MCF 10A (cell line): ENCODE measurements at regions of chr7 and their contacts with region 1.

Region 1: GRCh38 chr7:94643771-94644540 is 12.0 kb downstream of the SGCE start:
- DNase-seq: peak; percentile 68
- H3K4me3 Mint-ChIP-seq: no peak overlapping the region
- H3K27ac Mint-ChIP-seq: peak overlapping the region; percentile 11
- H3K4me1 Mint-ChIP-seq: peaks cover 25% of the 10 kb centered on the region
- H3K27me3 Mint-ChIP-seq: no peaks in the 10 kb centered on the region
- CTCF ChIP-seq: no peak

Region 2: GRCh38 chr7:94410413-94411187 is 233.4 kb before region 1 on chr7:
- CTCF ChIA-PET with region 1: no interaction called
- POLR2A ChIA-PET with region 1: no interaction called
- intact Hi-C with region 1: no loop called
- DNase-seq: no peak
- H3K4me3 Mint-ChIP-seq: no peak overlapping the region
- H3K27ac Mint-ChIP-seq: no peak overlapping the region
- H3K4me1 Mint-ChIP-seq: peaks cover 5% of the 10 kb centered on the region
- H3K27me3 Mint-ChIP-seq: no peaks in the 10 kb centered on the region
- CTCF ChIP-seq: no peak

Region 3: DNA sequence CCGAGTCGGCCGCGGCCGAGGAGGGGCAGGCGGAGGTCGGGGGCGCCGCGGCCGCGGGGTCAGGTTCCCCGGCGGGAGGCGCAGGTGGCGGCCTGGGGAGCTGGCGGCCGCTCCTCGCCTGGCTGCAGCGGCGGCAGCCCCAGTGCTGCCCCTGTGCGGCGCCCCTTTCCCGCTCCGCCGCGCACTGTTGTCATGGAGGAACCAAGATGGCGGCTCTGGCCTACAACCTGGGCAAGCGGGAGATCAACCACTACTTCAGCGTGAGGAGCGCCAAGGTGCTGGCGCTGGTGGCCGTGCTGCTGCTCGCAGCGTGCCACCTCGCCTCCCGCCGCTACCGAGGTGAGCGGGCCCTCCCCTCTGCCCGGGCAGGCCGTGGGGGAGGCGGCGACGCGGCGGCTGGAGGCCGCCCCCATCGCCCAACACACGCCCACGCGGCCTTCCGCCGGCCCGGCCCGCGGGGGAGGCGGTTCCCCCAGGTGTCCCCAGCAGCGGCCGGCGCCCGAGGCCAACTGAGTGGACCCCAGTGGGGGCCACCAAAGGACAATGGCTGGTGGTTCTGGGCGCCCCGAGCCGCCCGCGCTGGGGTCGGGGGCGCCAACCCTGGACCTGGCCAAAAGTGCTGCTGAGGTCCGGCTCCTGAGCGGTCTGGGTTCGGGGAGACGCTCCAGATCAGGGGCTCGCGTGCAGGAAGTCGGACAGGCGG is 133.9 kb before region 1 on chr7:
- CTCF ChIA-PET with region 1: interaction called, 4 read pairs
- POLR2A ChIA-PET with region 1: interaction called, 11 read pairs
- intact Hi-C with region 1: no loop called
- DNase-seq: peak; percentile 65
- H3K4me3 Mint-ChIP-seq: peak overlapping the region; percentile 69
- H3K27ac Mint-ChIP-seq: peak overlapping the region; percentile 43
- H3K4me1 Mint-ChIP-seq: peaks cover 32% of the 10 kb centered on the region
- H3K27me3 Mint-ChIP-seq: no peaks in the 10 kb centered on the region
- CTCF ChIP-seq: no peak

Region 4: DNA sequence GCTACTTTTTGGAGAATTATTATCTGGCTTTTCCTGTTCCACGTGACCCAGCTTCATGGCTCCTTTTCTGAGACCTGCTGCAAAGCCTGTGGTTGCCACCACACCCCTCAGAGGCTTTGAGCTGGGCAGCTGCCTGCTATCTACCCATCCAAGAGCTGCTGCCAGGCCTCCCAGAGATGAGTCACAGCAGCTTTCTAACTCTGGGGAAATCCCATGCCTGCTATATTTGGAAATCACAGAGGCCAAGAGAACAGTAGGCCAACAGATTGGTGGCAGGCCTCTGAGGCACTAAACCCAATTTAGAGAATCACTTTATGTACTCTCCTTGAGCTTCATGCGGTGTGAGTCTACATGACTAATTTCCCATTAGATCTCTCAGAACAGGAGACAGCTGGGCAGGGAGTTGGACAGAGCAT is 23.2 kb before region 1 on chr7:
- CTCF ChIA-PET with region 1: interaction called, 4 read pairs
- POLR2A ChIA-PET with region 1: interaction called, 12 read pairs
- intact Hi-C with region 1: no loop called
- DNase-seq: peak; percentile 97
- H3K4me3 Mint-ChIP-seq: no peak overlapping the region
- H3K27ac Mint-ChIP-seq: peak overlapping the region; percentile 75
- H3K4me1 Mint-ChIP-seq: peaks cover 13% of the 10 kb centered on the region
- H3K27me3 Mint-ChIP-seq: no peaks in the 10 kb centered on the region
- CTCF ChIP-seq: no peak

Region 5: DNA sequence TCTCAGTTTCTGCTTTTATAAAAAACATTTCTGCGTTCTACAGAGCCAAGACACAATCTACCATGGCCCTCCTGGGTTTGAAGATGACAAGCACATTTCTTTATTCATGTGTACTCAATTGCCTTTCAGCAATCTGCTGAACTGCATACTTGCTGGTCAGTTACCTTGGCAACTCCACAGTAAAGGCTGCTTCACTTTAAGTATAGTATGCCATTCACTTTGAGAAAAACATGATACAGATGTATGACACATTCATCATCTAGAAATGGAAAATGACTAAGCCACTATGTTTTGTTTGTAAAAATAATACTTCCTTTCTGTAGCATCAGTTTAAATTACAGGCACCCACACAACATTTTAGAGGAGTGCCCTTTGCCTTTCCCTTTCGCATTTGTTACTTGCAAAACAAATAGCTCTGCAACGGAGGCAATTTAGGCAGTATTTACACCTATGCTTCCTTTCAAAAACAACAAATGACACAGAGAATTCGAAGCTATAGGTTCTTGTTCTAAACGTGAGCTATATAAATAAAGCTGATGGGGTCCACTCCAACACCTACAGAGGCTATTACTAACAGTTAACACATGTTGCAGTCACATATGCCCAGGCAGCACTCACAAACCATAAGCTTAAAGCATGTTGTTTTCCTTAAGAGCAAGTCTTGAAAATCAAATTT is 11.5 kb before region 1 on chr7:
- CTCF ChIA-PET with region 1: interaction called, 3 read pairs
- POLR2A ChIA-PET with region 1: interaction called, 12 read pairs
- intact Hi-C with region 1: no loop called
- DNase-seq: peak; percentile 59
- H3K4me3 Mint-ChIP-seq: no peak overlapping the region
- H3K27ac Mint-ChIP-seq: peak overlapping the region; percentile 16
- H3K4me1 Mint-ChIP-seq: peaks cover 16% of the 10 kb centered on the region
- H3K27me3 Mint-ChIP-seq: no peaks in the 10 kb centered on the region
- CTCF ChIP-seq: no peak

Region 6: DNA sequence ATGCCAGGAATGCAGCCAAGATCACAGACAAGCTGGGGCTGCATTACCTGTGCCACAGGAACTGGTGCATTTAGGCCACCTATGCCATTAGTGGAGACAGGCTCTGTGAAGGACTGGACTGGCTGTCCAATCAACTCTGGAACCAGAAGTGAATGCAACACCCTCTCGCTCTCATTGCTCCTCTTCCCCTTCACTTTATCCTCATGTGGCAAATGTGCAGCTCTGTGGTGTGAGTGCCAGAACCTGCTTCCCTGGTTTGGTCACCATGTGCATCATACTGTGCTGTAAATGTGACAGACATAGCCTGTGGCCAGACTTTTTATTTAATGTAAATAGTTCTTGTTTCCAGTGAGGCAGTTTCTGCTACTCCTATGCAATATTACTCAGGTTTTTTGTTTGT is 190.3 kb after region 1 on chr7:
- CTCF ChIA-PET with region 1: no interaction called
- POLR2A ChIA-PET with region 1: no interaction called
- intact Hi-C with region 1: no loop called
- DNase-seq: no peak
- H3K4me3 Mint-ChIP-seq: no peak overlapping the region
- H3K27ac Mint-ChIP-seq: no peak overlapping the region
- H3K4me1 Mint-ChIP-seq: no peaks in the 10 kb centered on the region
- H3K27me3 Mint-ChIP-seq: no peaks in the 10 kb centered on the region
- CTCF ChIP-seq: no peak

Region 7: GRCh38 chr7:94941844-94942632 is 298.1 kb after region 1 on chr7:
- CTCF ChIA-PET with region 1: no interaction called
- POLR2A ChIA-PET with region 1: no interaction called
- intact Hi-C with region 1: no loop called
- DNase-seq: no peak
- H3K4me3 Mint-ChIP-seq: no peak overlapping the region
- H3K27ac Mint-ChIP-seq: no peak overlapping the region
- H3K4me1 Mint-ChIP-seq: no peaks in the 10 kb centered on the region
- H3K27me3 Mint-ChIP-seq: no peaks in the 10 kb centered on the region
- CTCF ChIP-seq: no peak

Region 8: DNA sequence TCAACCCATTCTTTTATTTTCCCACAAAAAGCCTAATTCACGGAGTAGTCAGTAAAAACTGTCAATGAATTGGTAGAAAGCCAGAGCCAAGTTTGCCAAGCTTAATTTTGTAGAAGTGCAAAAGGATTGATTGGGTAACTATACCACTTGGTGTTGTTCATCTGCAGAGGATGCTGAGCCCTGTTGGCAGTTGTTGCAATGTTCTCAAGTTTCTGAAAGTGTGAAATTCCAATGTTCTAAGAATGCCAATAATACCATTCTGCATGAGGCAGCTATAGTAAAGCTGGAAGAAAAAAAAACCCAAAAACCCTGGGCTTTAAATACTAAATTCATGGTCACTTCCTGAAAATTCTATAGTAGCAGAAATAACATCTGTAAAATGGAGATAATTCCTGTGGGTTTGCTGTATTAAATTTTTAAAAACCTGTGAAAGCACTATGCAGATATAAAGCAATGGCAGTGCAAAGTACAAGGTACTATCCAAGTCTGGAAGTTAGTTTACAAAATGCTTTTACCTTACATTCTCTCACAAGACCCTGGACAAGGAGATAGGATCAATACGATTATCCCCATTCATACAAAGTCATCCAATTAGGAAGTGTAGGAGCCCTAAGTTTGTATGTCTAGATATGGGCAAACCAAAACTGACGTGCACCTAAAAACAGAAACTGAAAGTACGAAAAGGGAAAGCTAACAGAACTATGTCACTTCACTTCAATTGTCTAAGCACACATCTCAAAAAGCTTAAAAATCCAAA is 686.4 kb after region 1 on chr7:
- CTCF ChIA-PET with region 1: no interaction called
- POLR2A ChIA-PET with region 1: no interaction called
- intact Hi-C with region 1: no loop called
- DNase-seq: peak; percentile 47
- H3K4me3 Mint-ChIP-seq: no peak overlapping the region
- H3K27ac Mint-ChIP-seq: no peak overlapping the region
- H3K4me1 Mint-ChIP-seq: peaks cover 13% of the 10 kb centered on the region
- H3K27me3 Mint-ChIP-seq: peaks cover 21% of the 10 kb centered on the region
- CTCF ChIP-seq: no peak